HepG2 (cell line): ENCODE measurements at regions of chr3 and their contacts with region 1.

Region 1: DNA sequence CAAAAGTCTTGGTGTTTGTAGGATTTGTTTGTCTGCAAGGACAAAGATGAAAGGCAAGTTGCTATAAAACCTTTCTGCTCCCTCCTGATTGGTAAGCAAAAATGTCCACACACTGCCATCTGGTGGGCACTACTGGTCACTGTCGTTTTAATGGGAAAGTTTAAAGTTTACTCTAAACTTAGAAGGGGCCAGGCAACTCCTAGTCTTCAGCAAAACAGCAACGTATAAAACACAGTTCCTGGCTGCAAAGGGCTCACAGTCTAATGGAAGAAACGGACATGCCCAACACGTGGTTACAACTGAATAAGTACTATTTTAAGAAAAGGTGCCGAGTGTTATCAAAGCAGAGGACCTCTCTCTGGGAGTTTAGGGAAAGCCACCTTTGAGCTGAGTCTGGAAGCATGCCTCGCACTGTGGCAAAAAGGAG is 23.7 kb upstream of the TPRG1 start:
- DNase-seq: peak; percentile 52
- ATAC-seq: peak; percentile 94
- H3K4me3 ChIP-seq: no peak overlapping the region
- H3K27ac ChIP-seq: no peak overlapping the region
- H3K4me1 ChIP-seq: peaks cover 10% of the 10 kb centered on the region
- H3K27me3 ChIP-seq: no peaks in the 10 kb centered on the region; a peak in 2 of 5 replicates
- CTCF ChIP-seq: peak; percentile 84
- EP300 ChIP-seq: no peak
- POLR2A ChIP-seq: no peak
- RAD21 ChIP-seq: peak; percentile 25; the same call in 1 of the 2 replicates

Region 2: GRCh38 chr3:187616307-187616972 is 1531.7 kb before region 1 on chr3:
- CTCF ChIA-PET with region 1: no interaction called
- POLR2A ChIA-PET with region 1: no interaction called
- in situ Hi-C with region 1: no loop called
- intact Hi-C with region 1: loop called (anchors 5 kb)
- DNase-seq: peak; percentile 35
- ATAC-seq: peak; percentile 79
- H3K4me3 ChIP-seq: no peak overlapping the region
- H3K27ac ChIP-seq: no peak overlapping the region
- H3K4me1 ChIP-seq: no peaks in the 10 kb centered on the region
- H3K27me3 ChIP-seq: no peaks in the 10 kb centered on the region
- CTCF ChIP-seq: peak; percentile 74
- EP300 ChIP-seq: no peak
- POLR2A ChIP-seq: no peak
- RAD21 ChIP-seq: peak; percentile 38; the same call in 1 of the 2 replicates

Region 3: DNA sequence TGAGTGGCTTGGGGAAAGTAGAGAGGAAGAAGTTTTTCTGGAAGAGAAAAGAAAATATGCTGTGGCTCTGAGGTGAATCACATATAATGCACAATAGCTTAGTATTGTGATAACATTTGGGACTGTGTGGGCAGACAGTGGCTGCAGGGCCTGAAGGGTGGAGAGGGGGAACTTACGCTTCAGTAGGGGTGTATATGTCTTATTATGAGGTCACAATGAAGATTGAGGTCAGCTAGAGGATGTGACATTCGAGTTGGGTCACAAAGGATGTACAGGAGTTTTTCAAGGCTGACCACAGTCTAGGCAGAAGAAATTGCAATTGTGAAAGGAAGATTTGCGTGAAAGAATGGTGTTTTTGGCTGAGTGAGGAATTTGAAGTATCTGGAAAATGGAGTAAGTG is 579.4 kb before region 1 on chr3:
- CTCF ChIA-PET with region 1: no interaction called
- POLR2A ChIA-PET with region 1: no interaction called
- in situ Hi-C with region 1: no loop called
- intact Hi-C with region 1: no loop called
- DNase-seq: no peak
- ATAC-seq: no peak
- H3K4me3 ChIP-seq: no peak overlapping the region
- H3K27ac ChIP-seq: no peak overlapping the region
- H3K4me1 ChIP-seq: peaks cover 10% of the 10 kb centered on the region
- H3K27me3 ChIP-seq: no peaks in the 10 kb centered on the region
- CTCF ChIP-seq: no peak
- EP300 ChIP-seq: no peak
- POLR2A ChIP-seq: no peak
- RAD21 ChIP-seq: no peak

Region 4: DNA sequence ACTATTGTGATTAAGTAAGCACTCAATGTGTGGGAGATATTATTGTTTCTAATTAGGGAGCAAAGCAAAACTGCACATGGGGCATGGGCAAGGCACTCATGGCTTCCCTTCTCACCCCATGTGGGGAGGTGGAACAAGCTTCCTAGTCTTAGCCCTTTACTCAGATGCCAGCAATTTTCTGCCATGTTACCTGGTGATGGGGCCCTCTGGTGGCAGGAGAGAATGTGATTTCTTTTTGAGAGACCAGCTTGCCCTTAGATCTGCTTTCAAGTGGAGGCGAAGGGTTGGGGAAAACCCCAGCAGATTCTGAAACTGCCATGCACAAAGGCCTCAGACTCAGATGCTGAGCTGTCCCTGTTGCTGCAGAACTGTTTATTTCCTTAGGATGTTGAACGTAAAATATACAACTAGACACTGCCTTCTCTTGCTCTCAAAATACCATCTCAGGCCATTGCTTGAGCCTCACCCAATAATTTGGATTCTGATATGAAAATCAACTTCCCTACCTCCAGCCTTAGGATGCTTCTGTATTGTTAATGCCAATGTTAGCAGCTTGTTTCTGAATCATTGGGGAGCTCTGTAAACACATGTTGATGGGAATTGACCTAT is 106.5 kb before region 1 on chr3:
- CTCF ChIA-PET with region 1: no interaction called
- POLR2A ChIA-PET with region 1: no interaction called
- in situ Hi-C with region 1: no loop called
- intact Hi-C with region 1: loop called (anchors 10 kb)
- DNase-seq: peak; percentile 58
- ATAC-seq: peak; percentile 85
- H3K4me3 ChIP-seq: no peak overlapping the region
- H3K27ac ChIP-seq: no peak overlapping the region
- H3K4me1 ChIP-seq: peaks cover 15% of the 10 kb centered on the region
- H3K27me3 ChIP-seq: no peaks in the 10 kb centered on the region; a peak in 1 of 5 replicates
- CTCF ChIP-seq: peak; percentile 62
- EP300 ChIP-seq: no peak
- POLR2A ChIP-seq: no peak
- RAD21 ChIP-seq: no peak